Mucosa of descending colon (tissue), 3 donors: ENCODE measurements at regions of chr9 and their contacts with region 1.

Region 1: GRCh38 chr9:20941174-20941690 is 90.2 kb downstream of the HACD4 start:
- DNase-seq: peak; percentile 31 to 75 (median 46)
- ATAC-seq: peak; percentile 98
- H3K4me3 ChIP-seq: no peak overlapping the region
- H3K4me1 ChIP-seq: no peaks in the 10 kb centered on the region
- CTCF ChIP-seq: peak; percentile 69

Region 2: GRCh38 chr9:19925817-19926503 is 1015.3 kb before region 1 on chr9:
- intact Hi-C with region 1: loop called (anchors 5 to 10 kb)
- DNase-seq: peak; percentile 51 to 67 (median 61)
- ATAC-seq: peak; percentile 98
- H3K4me3 ChIP-seq: no peak overlapping the region
- H3K4me1 ChIP-seq: no peaks in the 10 kb centered on the region
- CTCF ChIP-seq: peak; percentile 88

Region 3: DNA sequence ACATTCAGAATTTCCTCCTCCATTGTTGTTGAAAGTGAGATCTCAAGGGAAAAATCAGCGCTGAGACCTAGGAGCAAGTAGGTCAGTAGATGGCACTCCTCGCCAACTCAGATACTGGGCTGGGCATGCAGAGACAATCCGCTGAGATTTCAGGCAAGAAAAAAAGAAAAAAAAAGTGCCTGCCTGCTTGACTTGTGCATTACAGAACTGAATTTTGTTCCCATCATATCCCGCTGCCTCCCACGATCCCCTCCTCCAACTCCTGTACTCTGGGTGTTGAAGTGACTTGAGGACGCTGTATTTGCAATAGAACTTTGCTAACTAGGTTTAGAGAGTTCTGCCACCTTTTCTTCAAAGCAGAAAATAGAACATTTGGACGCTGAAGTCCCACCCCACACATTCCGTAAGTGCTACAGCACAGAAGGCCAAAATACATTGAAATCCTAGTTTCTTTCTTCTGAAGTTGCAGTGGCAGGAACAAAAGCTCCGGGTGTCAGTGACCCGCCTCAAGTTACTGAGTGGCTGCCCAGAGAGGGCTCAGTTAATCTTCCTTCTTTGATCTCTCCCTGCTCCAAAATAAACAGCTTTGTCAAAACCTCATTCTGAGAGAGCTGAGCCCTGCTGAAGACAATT is 584.7 kb before region 1 on chr9:
- intact Hi-C with region 1: loop called (anchors 5 to 10 kb)
- DNase-seq: peak; percentile 53 to 84 (median 67)
- ATAC-seq: peak; percentile 89
- H3K4me3 ChIP-seq: no peak overlapping the region
- H3K4me1 ChIP-seq: peaks cover 10% of the 10 kb centered on the region
- CTCF ChIP-seq: peak; percentile 39

Region 4: GRCh38 chr9:20622330-20623020 is 318.8 kb before region 1 on chr9 and contains the start of gene MLLT3:
- intact Hi-C with region 1: loop called in 1 of 2 experiments (anchors 10 kb)
- DNase-seq: peak; percentile 97 to 98 (median 98)
- ATAC-seq: peak; percentile 90
- H3K4me3 ChIP-seq: peak within 1 kb of the TSS; percentile 73
- H3K4me1 ChIP-seq: peaks cover 14% of the 10 kb centered on the region
- CTCF ChIP-seq: no peak
- total RNA-seq, gene MLLT3: 35.1 to 53.7 (median 46.5) TPM

Region 5: DNA sequence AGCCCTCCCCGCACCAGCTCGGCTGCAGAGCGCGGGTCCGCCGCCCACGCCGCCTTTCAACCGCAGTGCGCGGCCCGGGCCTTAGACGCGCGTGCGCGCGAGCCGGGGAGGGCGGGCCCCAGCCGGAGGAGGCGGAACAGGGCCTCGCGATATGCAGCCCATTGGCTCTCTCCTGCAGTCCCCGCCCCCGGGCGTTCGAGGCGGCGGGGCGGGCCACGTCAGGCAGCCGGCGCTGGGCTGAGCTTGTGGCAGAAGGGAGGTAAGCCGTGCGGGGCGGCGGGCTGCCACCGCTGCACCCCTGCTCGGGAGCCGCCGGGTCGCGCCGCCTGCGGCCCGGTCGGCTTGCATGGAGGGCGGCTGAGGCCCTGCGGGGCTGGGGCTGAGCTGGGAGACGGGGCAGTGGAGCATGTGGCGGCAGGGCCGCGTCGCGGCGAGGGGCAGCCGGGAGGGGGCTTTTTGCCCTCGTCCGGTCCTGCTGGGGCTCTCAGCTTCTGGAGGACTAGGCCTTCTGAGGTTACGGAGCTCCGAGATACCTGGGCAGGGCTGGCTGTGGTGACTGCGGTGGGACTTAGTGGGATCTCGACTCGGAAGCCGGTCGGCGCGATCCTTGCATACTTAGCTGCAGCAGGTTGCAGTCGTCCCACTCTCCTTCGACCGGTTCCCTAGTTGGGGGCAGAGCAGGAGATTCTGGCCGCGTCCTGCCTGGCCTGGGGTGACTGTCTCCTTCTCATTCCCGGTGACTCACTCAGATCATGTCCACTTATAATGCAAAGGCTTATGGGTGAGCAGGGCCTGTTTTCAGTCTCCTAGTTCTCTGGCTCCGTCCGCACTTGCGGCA is 257.0 kb before region 1 on chr9 and contains the start of gene FOCAD:
- intact Hi-C with region 1: no loop called
- DNase-seq: peak; percentile 96 to 97 (median 97)
- ATAC-seq: peak; percentile 99
- H3K4me3 ChIP-seq: peak within 1 kb of the TSS; percentile 81
- H3K4me1 ChIP-seq: peaks cover 13% of the 10 kb centered on the region
- CTCF ChIP-seq: no peak
- total RNA-seq, gene FOCAD: 26.6 to 30.3 (median 26.9) TPM